ENCODE measurements at regions of chr1 and their contacts with region 1.

Region 1: DNA sequence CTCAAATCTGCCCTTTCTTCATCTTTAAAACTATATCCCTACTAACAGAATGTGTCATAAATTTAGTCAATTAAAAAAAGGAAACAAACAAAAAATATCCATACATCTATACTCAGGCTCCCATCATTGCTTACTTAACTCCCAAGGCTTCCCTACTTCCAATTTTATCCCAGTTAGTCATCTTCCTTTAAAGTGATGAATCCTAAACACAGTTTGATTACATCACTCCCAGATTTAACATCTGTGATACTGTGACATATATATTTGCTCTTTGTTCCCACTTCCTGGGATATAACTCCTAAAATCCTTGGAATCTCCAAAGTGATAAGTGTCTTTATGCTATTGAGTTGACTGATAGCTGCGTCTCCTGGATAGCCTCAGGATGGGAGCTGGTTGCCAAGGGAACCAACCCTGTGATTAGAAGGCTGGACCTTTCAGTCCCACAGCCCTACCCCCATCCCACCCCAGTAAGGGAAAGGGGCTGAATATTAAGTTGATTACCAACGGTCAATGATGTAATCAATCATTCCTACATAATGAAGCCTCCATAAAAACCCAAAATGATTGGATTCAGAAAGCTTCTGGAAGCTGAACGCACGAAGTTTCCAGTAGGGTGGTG is 21.6 kb downstream of the GLMN start:
- DNase-seq: no peak
- H3K4me3 ChIP-seq: no peak overlapping the region
- H3K27ac ChIP-seq: no peak overlapping the region
- H3K4me1 ChIP-seq: no peaks in the 10 kb centered on the region
- H3K27me3 ChIP-seq: no peaks in the 10 kb centered on the region
- CTCF ChIP-seq: no peak
- POLR2A ChIP-seq: no peak

Region 2: GRCh38 chr1:92096317-92096716 is 180.9 kb before region 1 on chr1:
- intact Hi-C with region 1: no loop called
- DNase-seq: no peak
- H3K4me3 ChIP-seq: no peak overlapping the region
- H3K27ac ChIP-seq: no peak overlapping the region
- H3K4me1 ChIP-seq: no peaks in the 10 kb centered on the region
- H3K27me3 ChIP-seq: no peaks in the 10 kb centered on the region
- CTCF ChIP-seq: no peak
- POLR2A ChIP-seq: no peak

Region 3: DNA sequence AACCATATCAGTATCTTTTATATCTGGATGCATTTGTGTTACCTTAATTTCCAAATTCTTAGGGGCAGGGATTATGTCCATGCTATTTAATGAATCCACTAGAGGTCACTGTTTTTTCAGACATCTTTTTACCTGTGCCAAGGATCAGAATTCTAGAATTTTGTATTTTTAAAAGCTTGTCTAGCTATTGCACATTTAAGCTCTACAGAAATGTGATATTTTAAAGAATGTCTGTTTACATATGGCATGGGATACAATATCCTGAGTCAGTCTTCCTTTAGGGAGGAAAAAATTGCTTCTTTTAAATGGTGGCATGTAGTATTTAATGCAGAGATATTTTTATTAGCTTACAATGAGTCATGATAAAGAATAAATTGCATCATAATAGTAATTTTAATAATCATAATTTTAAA is 33.0 kb after region 1 on chr1:
- intact Hi-C with region 1: loop called (anchors 5 kb)
- DNase-seq: no peak
- H3K4me3 ChIP-seq: no peak overlapping the region
- H3K27ac ChIP-seq: no peak overlapping the region
- H3K4me1 ChIP-seq: no peaks in the 10 kb centered on the region
- H3K27me3 ChIP-seq: no peaks in the 10 kb centered on the region
- CTCF ChIP-seq: no peak
- POLR2A ChIP-seq: no peak

Measured in vagina (tissue), 2 donors.